ENCODE measurements at regions of chr3 and their contacts with region 1.

Region 1: DNA sequence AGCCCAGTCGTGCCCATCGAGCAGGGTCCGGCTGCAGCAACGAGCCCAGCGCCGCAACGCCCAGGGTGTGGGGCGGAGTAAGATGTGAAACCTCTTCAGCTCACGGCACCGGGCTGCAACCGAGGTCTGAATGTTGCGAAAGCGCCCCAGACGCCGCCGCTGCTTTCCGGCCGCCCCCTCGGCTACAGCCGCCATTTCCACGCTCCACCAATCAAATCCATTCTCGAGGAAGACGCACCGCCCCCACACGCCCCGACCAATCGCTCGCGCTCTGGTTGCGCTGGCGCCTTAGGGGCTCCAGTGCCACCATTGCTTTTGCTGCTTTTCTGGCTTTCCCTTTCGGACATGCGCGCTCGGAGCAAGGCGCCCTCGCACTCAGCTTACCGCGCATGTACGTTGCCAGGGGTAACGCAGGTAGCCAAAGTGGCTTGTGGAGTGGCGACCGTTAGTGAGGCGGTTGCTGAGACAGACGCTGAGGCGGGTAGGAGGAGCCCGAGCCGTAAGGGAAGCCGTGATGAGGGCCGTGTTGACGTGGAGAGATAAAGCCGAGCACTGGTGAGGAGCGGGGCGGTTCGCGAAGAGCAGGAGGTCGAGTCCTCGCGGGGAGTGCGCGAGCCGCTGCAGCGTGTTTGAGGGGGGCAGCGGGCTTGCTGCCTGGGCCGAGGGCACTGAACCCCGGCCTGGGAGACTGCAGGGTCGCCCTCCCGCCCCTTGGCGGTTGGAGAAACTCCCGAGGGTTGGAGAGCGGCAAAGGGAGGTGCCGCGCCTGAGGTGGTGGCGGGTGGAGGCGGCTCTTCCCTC is at the starts of genes IFT122 and MBD4:
- DNase-seq: peak; percentile 99
- total RNA-seq, gene IFT122: 11.0 TPM
- total RNA-seq, gene MBD4: 18.2 TPM

Region 2: GRCh38 chr3:129399895-129400357 is 40.1 kb before region 1 on chr3:
- intact Hi-C with region 1: loop called (anchors 2 kb)
- DNase-seq: no peak

Region 3: DNA sequence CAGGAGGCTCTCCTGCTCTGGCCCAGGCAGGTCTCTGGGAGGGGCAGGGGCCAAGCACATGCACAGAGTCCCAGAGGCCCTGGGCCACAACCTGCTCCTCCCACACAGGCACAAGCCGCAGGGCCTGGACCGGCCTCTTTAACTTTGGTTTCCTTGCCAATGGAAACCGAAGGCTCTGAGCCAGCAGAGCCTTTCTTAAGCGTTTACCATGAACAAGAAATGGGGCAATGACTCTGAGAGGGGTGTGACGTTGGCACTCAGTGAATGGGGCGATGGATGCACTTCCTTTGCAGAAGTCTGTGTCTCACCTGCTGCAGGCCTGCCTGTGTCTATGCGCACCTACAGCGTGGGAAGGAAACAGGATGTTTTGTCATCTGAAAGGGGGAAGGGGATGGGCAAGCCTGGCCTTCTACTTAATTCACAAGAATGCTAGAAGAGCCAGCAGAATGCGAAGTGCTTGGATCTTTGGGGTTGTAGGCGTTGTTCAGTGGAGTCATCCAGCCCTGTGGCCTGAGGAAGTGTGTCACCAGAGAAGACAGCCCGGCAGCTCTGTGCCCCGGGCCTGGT is 41.8 kb after region 1 on chr3:
- intact Hi-C with region 1: loop called (anchors 5 kb)
- DNase-seq: no peak

Region 4: GRCh38 chr3:129493206-129493605 is 53.2 kb after region 1 on chr3:
- intact Hi-C with region 1: no loop called
- DNase-seq: no peak